ENCODE measurements at regions of chr17 and their contacts with region 1.

Region 1: GRCh38 chr17:74790161-74791054 is 14.3 kb upstream of the NAT9 start:
- DNase-seq: peak in 1 of 35 experiments; percentile 23
- ATAC-seq: peak; percentile 35 to 54 (median 40)
- H3K4me3 ChIP-seq: no peak overlapping the region
- H3K4me3 Mint-ChIP-seq: peak overlapping the region in 2 of 3 donors; percentile 13 to 65
- H3K27ac ChIP-seq: no peak overlapping the region
- H3K27ac Mint-ChIP-seq: peak overlapping the region; percentile 81 to 84
- H3K4me1 ChIP-seq: peaks cover 24 to 40% of the 10 kb centered on the region in 2 experiments
- H3K4me1 Mint-ChIP-seq: peaks cover 31 to 44% (median 32%) of the 10 kb centered on the region in 3 donors
- H3K27me3 ChIP-seq: no peaks in the 10 kb centered on the region
- H3K27me3 Mint-ChIP-seq: no peaks in the 10 kb centered on the region

Region 2: DNA sequence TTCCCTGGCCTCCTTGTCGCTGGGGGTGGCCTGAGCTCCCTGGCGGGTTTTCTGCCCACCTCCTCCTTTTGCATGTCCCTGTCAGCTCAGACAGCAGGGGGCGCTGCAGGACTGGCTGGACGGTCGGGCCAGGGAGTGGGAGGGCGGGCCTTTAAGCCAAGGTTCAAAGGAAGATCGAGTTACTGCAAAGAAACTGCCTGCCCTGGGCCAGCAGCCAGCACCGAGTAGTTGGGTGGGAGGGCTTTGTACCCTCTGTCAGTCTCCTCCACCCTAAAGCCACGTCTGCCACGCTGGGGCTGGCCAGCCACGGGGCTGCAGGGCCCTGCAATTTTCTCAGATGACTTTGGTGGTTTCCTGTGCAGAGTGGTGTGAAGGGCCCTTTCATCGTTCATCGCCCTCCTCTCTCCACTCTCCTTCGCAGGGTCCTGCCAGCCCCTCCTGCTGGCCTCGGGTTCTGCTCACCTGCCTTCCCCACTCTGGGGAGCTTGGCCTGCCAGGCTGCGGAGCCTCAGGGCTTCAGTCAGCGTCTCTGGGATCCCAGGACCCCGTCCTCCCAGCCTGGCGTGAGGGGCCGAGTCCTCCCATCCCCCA is 410.8 kb before region 1 on chr17:
- CTCF ChIA-PET with region 1: no interaction called
- POLR2A ChIA-PET with region 1: no interaction called
- DNase-seq: peak; percentile 71 to 93 (median 88)
- ATAC-seq: peak; percentile 88 to 96 (median 88)
- H3K4me3 ChIP-seq: peak overlapping the region in 1 of 2 donors; percentile 6
- H3K4me3 Mint-ChIP-seq: peak overlapping the region in 1 of 3 donors; percentile 10
- H3K27ac ChIP-seq: no peak overlapping the region
- H3K27ac Mint-ChIP-seq: no peak overlapping the region
- H3K4me1 ChIP-seq: peaks cover 3 to 21% of the 10 kb centered on the region in 2 experiments
- H3K4me1 Mint-ChIP-seq: peaks cover 0 to 11% (median 3%) of the 10 kb centered on the region in 3 donors
- H3K27me3 ChIP-seq: peaks cover 0 to 17% of the 10 kb centered on the region in 2 experiments
- H3K27me3 Mint-ChIP-seq: no peaks in the 10 kb centered on the region

Region 3: GRCh38 chr17:74394977-74395376 is 395.4 kb before region 1 on chr17:
- CTCF ChIA-PET with region 1: no interaction called
- POLR2A ChIA-PET with region 1: no interaction called
- DNase-seq: no peak
- ATAC-seq: no peak
- H3K4me3 ChIP-seq: no peak overlapping the region
- H3K4me3 Mint-ChIP-seq: no peak overlapping the region
- H3K27ac ChIP-seq: no peak overlapping the region
- H3K27ac Mint-ChIP-seq: no peak overlapping the region
- H3K4me1 ChIP-seq: no peaks in the 10 kb centered on the region
- H3K4me1 Mint-ChIP-seq: no peaks in the 10 kb centered on the region
- H3K27me3 ChIP-seq: peaks cover 0 to 13% of the 10 kb centered on the region in 2 experiments
- H3K27me3 Mint-ChIP-seq: peaks cover 0 to 4% of the 10 kb centered on the region in 2 donors

Region 4: DNA sequence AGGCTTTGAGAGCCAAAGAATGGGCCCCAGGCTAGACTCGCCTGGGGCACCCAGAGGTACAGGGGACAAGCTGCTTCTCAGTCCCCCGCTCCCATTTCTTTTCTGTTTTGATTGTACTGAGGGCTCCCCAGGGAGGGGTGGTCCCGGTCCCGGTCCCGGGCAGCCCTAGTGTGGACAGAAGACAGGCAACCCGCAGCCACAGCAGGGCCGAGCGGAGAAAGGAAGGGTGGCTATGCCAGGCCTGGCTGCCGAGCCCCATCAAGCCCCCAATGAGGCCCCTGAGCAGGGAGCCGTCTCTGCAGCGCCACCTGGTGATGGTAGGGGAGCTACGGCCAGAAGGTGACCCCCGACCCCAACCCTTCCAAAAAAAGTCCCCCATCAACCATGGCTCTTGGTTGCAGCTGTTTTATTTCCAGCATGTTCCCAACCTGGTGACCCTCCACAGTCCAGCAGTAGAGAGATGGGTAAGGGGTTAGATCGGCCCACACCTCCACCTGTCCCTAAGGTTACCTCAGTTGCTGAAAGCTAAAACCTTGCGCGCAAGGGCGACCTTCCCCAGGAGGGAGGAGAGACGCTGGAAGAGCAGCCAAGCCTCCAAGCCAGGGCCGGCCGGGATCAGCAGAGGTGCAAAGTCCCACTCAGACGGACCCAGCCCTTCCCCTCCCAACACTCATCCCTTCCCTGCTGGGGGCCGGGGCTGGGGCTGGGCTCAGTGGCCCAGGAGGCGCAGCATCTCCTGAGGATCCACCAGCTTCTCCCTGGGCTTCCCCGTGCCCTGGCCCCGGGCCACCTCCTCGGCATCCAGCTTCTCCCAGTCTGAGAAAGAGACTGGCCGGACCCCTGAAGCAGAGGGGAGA is 71.9 kb after region 1 on chr17:
- CTCF ChIA-PET with region 1: interaction called, 7 to 10 read pairs
- POLR2A ChIA-PET with region 1: no interaction called
- DNase-seq: peak in 34 of 35 experiments; percentile 24 to 83 (median 59)
- ATAC-seq: peak; percentile 42 to 63 (median 52)
- H3K4me3 ChIP-seq: peak overlapping the region in 1 of 2 donors; percentile 42
- H3K4me3 Mint-ChIP-seq: peak overlapping the region; percentile 31 to 61 (median 34)
- H3K27ac ChIP-seq: no peak overlapping the region
- H3K27ac Mint-ChIP-seq: no peak overlapping the region
- H3K4me1 ChIP-seq: peaks cover 11 to 36% of the 10 kb centered on the region in 2 experiments
- H3K4me1 Mint-ChIP-seq: peaks cover 18 to 30% (median 25%) of the 10 kb centered on the region in 3 donors
- H3K27me3 ChIP-seq: peaks cover 5 to 56% of the 10 kb centered on the region in 2 experiments
- H3K27me3 Mint-ChIP-seq: peaks cover 21 to 31% of the 10 kb centered on the region in 2 donors